Posterior vena cava (tissue), 2 donors: ENCODE measurements at regions of chr1 and their contacts with region 1.

Region 1: DNA sequence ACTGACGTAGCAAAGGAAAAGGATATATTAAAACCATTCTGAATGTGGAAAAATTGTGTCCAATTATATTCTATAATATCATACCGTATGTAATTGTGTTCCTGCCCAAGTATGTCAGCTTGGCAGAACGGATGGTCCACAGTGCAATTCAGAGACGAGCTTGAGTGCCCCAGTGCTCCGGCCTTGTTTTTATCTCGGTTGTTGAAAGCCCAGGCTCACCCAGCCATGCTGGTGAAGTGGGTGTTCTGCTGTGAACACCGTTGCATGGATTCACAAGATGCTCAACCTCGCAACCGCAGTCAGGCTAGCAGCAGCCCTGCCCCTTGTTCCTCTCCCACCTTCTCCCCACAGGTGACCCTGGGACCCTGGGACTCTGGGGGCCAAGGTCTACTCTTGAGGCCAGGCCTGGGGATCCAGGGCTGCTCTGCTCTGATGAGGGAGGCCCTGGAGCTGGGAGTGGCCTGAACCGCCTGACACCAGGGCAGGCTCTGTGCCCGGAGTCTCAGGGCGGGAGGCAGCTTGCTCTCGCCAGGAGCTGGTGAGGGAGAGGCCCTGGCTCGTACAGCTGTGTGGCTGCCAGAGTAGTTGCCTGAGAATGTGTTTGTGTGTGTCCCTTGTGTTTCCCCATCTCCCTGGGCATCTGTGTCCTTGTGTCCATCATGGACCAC is 11.2 kb downstream of the PTPRF start:
- DNase-seq: peak; percentile 92

Region 2: GRCh38 chr1:42551180-42551579 is 990.7 kb before region 1 on chr1:
- intact Hi-C with region 1: no loop called
- DNase-seq: no peak

Region 3: GRCh38 chr1:43554444-43554992 is 12.7 kb after region 1 on chr1:
- intact Hi-C with region 1: no loop called
- DNase-seq: no peak

Region 4: DNA sequence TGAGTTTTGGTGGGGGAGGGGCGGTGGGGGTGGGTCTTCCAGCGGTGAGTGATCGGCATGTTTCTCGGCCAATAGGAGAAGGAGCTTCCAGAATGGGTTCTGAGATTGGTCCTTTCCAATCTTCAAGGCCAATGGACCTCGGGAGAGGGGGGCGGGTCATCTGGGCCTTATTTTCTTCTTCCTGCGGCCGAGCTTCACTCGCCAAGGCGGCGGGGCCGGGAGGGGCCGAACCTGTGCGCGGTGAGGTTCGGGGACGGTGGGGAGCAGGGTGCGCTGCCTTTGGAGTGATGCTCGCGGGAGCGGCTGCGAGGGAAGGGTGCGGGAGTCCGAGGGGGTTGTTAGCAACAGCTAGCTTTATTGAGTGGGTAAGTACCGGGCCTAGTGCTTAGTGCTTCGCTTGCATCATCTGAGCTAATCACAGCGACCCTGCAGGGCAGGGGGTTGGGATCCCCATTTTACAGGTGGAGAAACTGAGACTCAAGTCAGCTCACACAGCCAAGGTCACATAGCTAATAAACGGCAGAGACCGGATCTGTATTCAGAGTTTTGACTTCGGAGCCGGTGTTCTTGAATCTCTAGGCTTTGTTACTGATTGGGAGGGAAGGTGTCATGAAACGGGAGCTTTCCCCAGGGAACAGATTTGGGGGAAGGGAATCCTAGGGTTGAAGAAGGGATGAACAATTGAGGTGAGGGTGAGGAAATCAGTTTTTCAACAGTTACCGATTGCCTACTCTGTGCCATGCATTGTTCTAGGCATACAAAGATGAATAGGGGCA is 108.6 kb after region 1 on chr1:
- intact Hi-C with region 1: loop called in 1 of 2 experiments (anchors 5 kb)
- DNase-seq: peak; percentile 97